ENCODE measurements at regions of chr1 and their contacts with region 1.

Region 1: GRCh38 chr1:76154206-76154956 is 79.8 kb downstream of the ST6GALNAC3 start:
- DNase-seq: peak; percentile 94
- H3K4me3 Mint-ChIP-seq: peak overlapping the region; percentile 84
- H3K27ac Mint-ChIP-seq: peak overlapping the region; percentile 88
- H3K4me1 Mint-ChIP-seq: peaks cover 7% of the 10 kb centered on the region
- H3K27me3 Mint-ChIP-seq: no peaks in the 10 kb centered on the region

Region 2: GRCh38 chr1:76105372-76105771 is 49.0 kb before region 1 on chr1:
- intact Hi-C with region 1: no loop called
- DNase-seq: no peak
- H3K4me3 Mint-ChIP-seq: no peak overlapping the region
- H3K27ac Mint-ChIP-seq: no peak overlapping the region
- H3K4me1 Mint-ChIP-seq: peaks cover 8% of the 10 kb centered on the region
- H3K27me3 Mint-ChIP-seq: peaks cover 8% of the 10 kb centered on the region

Region 3: GRCh38 chr1:76254104-76255030 is 100.0 kb after region 1 on chr1:
- intact Hi-C with region 1: loop called (anchors 10 kb)
- DNase-seq: no peak
- H3K4me3 Mint-ChIP-seq: no peak overlapping the region
- H3K27ac Mint-ChIP-seq: peak overlapping the region; percentile 46
- H3K4me1 Mint-ChIP-seq: peaks cover 39% of the 10 kb centered on the region
- H3K27me3 Mint-ChIP-seq: no peaks in the 10 kb centered on the region

Region 4: DNA sequence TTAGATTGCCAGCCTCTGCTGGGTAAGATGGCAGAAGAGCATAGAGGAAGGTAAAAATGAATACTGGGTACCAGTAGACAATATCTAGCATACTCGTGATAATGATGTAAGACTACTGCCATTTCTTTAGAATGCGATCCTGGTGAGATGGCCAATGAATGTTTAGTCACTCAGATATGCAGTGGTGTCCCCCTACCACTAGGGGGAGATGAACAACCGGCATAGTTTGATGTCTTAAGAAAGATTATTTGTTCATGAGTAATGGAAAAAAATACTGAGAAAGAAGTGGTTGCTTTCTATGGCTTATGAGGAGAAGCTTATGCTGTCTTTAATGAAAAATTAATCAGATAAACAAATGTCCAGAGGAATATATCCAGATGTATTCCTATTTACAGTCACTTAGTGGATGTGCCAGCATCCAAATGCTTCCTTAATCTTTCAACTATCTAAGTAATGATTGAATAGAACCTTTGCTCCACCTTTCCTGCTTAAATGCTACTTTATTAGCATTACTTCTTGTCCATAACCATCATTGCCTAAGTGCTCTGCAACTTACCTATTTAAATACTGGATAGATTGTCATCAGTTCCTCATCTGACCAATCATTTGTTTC is 176.7 kb after region 1 on chr1:
- intact Hi-C with region 1: loop called (anchors 1 kb)
- DNase-seq: peak; percentile 79
- H3K4me3 Mint-ChIP-seq: no peak overlapping the region
- H3K27ac Mint-ChIP-seq: no peak overlapping the region
- H3K4me1 Mint-ChIP-seq: peaks cover 6% of the 10 kb centered on the region
- H3K27me3 Mint-ChIP-seq: peaks cover 4% of the 10 kb centered on the region

Region 5: DNA sequence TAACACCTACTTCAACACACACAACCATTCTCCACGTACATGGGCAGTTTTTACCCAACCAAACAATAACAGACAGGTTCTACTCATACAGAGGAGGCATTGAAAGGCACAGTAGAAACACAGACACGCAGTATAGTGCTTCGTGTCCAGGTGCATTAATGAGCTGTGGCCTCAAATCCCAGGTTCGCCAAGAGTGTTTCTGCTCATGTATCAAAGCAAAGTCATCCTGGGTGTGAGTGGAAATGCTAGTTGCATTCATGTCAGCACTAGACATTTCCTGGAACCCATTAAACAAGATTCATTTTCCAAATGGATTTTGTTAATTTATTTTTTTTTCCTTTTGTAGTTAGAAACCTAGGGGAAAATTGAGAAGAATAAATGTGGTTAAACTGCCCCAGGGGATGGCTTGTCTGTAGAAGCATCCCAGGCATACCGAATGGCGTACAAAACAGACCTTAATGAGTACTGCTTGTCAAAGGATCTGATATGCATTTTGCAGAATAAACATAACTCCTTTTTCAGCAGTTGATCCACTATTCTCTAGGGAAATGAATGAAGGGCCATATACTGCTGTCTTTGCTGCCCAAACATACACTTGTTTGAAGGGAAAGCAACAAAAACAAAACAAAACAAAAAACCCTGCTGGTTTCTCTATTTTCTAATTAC is 414.3 kb after region 1 on chr1:
- intact Hi-C with region 1: loop called (anchors 10 kb)
- DNase-seq: no peak
- H3K4me3 Mint-ChIP-seq: no peak overlapping the region
- H3K27ac Mint-ChIP-seq: no peak overlapping the region
- H3K4me1 Mint-ChIP-seq: no peaks in the 10 kb centered on the region
- H3K27me3 Mint-ChIP-seq: no peaks in the 10 kb centered on the region

Region 6: GRCh38 chr1:77126307-77126706 is 971.9 kb after region 1 on chr1:
- intact Hi-C with region 1: loop called (anchors 5 kb)
- DNase-seq: peak; percentile 73
- H3K4me3 Mint-ChIP-seq: no peak overlapping the region
- H3K27ac Mint-ChIP-seq: no peak overlapping the region
- H3K4me1 Mint-ChIP-seq: no peaks in the 10 kb centered on the region
- H3K27me3 Mint-ChIP-seq: no peaks in the 10 kb centered on the region

Region 7: GRCh38 chr1:77533660-77534305 is 1379.4 kb after region 1 on chr1:
- intact Hi-C with region 1: loop called (anchors 1 kb)
- DNase-seq: peak; percentile 84
- H3K4me3 Mint-ChIP-seq: no peak overlapping the region
- H3K27ac Mint-ChIP-seq: no peak overlapping the region
- H3K4me1 Mint-ChIP-seq: no peaks in the 10 kb centered on the region
- H3K27me3 Mint-ChIP-seq: no peaks in the 10 kb centered on the region

Measured in activated CD4-positive, alpha-beta T cell treated with anti-CD3 and anti-CD28 coated beads, Interleukin-2, amount 10 ng/mL, durations not matched to agents 24 days and 14 days (primary cell).